Transverse colon (tissue), 4 donors: ENCODE measurements at regions of chr12 and their contacts with region 1.

Region 1: GRCh38 chr12:56987551-56988053 is 18.7 kb downstream of the ZBTB39 start:
- DNase-seq: peak; percentile 85
- H3K4me3 ChIP-seq: no peak overlapping the region
- H3K27ac ChIP-seq: no peak overlapping the region
- H3K4me1 ChIP-seq: peaks cover 0 to 18% (median 1%) of the 10 kb centered on the region in 4 donors
- H3K27me3 ChIP-seq: no peaks in the 10 kb centered on the region
- CTCF ChIP-seq: peak; percentile 92 to 96 (median 96)
- EP300 ChIP-seq: no peak
- POLR2A ChIP-seq: no peak

Region 2: DNA sequence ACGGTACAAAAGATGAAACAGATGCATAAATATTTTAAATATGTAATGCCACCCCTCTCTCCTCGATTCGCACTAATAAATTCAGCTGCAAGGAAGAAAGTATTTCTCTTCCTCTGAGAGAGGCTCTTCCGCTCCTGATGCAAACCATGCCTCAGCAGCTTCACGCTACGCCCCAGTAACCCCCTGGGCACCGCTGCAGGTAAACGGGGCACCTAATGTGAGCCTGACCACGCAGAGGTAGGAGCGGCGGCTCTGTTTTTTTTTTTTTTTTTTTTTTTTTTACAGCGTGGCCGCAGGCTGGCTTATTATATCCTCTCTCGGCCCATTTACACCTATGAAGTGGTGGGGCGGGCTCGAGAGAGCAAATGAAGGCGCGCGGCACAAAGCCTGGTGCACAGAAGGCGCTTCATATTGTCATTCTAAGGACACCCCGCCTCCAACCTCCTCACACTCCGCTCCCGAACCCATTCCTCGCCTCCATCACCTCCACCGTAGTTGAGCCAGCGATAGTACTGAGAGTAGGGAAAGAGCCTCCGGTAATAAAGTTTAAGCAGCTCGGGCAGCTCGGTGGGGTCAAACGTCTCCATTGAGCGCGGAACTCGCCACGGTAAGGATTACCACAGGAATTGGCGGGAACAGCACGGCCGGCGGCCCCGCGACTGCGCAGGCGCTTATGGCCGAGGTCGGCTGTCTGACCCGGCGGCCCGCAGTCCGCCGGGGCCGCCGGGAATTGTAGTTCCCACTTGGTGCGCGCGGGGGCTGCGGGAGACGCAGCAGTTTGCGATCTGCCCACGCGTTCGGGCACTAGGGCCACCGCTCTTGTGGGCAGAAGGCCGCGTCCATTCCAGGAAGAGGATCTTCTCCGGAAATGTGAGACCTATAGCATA is 235.6 kb before region 1 on chr12 and contains the start of gene PRIM1:
- in situ Hi-C with region 1: loop called (anchors 5 to 10 kb)
- intact Hi-C with region 1: loop called (anchors 2 kb)
- DNase-seq: peak; percentile 87
- H3K4me3 ChIP-seq: peak within 1 kb of the TSS; percentile 8 to 89 (median 74)
- H3K27ac ChIP-seq: peak within 1 kb of the TSS; percentile 80 to 90 (median 83)
- H3K4me1 ChIP-seq: peaks cover 0 to 17% (median 9%) of the 10 kb centered on the region in 4 donors
- H3K27me3 ChIP-seq: no peaks in the 10 kb centered on the region
- CTCF ChIP-seq: peak in 4 of 5 experiments; percentile 25 to 60 (median 48)
- EP300 ChIP-seq: no peak
- POLR2A ChIP-seq: peak; percentile 33
- total RNA-seq, gene PRIM1: 1.4 to 10.6 (median 5.6) TPM in 3 of 4 donors, not detected in the other

Region 3: DNA sequence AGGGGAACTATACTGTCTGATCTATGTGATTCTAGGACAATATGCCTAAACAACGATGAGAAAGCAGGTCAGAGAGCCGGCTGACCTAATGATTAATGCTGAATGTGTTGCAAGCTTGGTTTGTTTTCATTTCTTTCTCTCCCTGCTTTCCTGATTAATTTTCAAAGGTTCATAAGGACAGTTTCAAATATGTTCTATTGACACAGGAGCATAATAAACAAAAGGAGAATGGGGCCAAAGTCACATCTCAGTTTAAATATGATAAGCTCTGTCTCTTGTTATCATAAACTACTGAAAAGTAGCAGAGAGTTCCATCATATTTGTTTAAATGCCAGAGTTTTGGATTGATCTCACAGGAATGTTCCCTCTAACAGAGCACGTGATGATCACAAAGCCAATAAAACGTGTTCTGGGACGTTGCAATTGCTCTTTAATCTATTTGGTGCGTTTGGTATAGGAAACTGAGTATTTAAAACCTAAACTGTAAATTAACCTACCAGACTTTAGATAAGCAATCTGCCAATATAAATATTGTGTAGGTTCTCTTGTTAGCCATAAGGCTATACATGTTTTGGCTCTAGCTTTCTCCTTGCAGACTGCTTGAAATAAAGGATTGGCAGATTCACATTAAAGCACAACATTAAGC is 228.2 kb before region 1 on chr12:
- in situ Hi-C with region 1: loop called (anchors 5 to 10 kb)
- intact Hi-C with region 1: loop called (anchors 2 kb)
- DNase-seq: no peak
- H3K4me3 ChIP-seq: no peak overlapping the region
- H3K27ac ChIP-seq: no peak overlapping the region
- H3K4me1 ChIP-seq: no peaks in the 10 kb centered on the region
- H3K27me3 ChIP-seq: no peaks in the 10 kb centered on the region
- CTCF ChIP-seq: no peak
- EP300 ChIP-seq: no peak
- POLR2A ChIP-seq: no peak

Region 4: GRCh38 chr12:56839915-56840325 is 147.7 kb before region 1 on chr12:
- in situ Hi-C with region 1: loop called in 1 of 4 experiments (anchors 10 kb)
- intact Hi-C with region 1: no loop called
- DNase-seq: peak; percentile 47
- H3K4me3 ChIP-seq: no peak overlapping the region
- H3K27ac ChIP-seq: no peak overlapping the region
- H3K4me1 ChIP-seq: no peaks in the 10 kb centered on the region
- H3K27me3 ChIP-seq: no peaks in the 10 kb centered on the region
- CTCF ChIP-seq: peak in 3 of 5 experiments; percentile 37 to 53 (median 46)
- EP300 ChIP-seq: no peak
- POLR2A ChIP-seq: no peak

Region 5: GRCh38 chr12:57033428-57033827 is 45.8 kb after region 1 on chr12:
- in situ Hi-C with region 1: no loop called
- intact Hi-C with region 1: no loop called
- DNase-seq: no peak
- H3K4me3 ChIP-seq: no peak overlapping the region
- H3K27ac ChIP-seq: no peak overlapping the region
- H3K4me1 ChIP-seq: peaks cover 0 to 7% (median 0%) of the 10 kb centered on the region in 4 donors
- H3K27me3 ChIP-seq: no peaks in the 10 kb centered on the region
- CTCF ChIP-seq: no peak
- EP300 ChIP-seq: no peak
- POLR2A ChIP-seq: no peak